ENCODE measurements at regions of chr3 and their contacts with region 1.

Region 1: GRCh38 chr3:128879125-128879969 is at the start of gene ACAD9:
- DNase-seq: peak; percentile 98
- ATAC-seq: peak; percentile 92
- H3K4me3 Mint-ChIP-seq: peak within 1 kb of the TSS; percentile 97
- H3K27ac Mint-ChIP-seq: peak within 1 kb of the TSS; percentile 99
- H3K4me1 Mint-ChIP-seq: peaks cover 66% of the 10 kb centered on the region
- H3K27me3 Mint-ChIP-seq: no peaks in the 10 kb centered on the region
- total RNA-seq, gene ACAD9: 60.0 to 70.7 TPM

Region 2: DNA sequence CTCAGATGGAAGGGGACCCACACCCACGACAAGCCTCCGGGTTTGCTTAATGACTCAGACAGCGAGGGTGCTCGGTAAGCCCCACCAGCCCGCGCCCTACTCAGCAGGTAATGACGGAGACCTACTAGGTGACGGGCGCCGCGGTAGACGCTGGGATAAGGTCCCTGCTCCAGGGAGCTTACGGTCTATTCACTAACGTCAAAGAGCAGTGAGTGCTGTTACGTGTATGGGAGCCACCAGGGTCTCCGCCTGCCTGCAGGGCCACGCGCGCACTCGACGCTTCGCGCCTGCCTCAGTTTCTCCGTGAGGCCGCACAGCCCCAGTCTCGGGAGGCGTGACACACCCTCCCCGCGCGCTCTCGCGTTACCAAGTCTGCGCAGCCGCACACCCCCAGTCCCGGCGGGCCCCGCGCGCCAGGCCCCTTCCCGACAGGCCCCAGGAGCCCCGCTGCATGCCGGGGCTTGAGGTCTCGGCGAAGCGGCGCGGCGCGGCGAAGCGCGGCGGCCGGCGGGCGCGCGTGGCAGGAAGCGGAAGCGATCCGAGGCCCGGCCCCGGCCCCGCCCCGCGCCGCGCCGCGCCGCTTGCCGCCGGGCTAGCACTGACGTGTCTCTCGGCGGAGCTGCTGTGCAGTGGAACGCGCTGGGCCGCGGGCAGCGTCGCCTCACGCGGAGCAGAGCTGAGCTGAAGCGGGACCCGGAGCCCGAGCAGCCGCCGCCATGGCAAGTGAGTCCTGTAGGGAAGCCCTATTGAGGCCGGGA is 827.3 kb before region 1 on chr3 and contains the start of gene SEC61A1:
- CTCF ChIA-PET with region 1: no interaction called
- POLR2A ChIA-PET with region 1: no interaction called
- intact Hi-C with region 1: loop called in 1 of 2 experiments (anchors 1 kb)
- DNase-seq: peak; percentile 98
- ATAC-seq: peak; percentile 96
- H3K4me3 Mint-ChIP-seq: peak within 1 kb of the TSS; percentile 90
- H3K27ac Mint-ChIP-seq: peak within 1 kb of the TSS; percentile 98
- H3K4me1 Mint-ChIP-seq: peaks cover 34% of the 10 kb centered on the region
- H3K27me3 Mint-ChIP-seq: no peaks in the 10 kb centered on the region
- total RNA-seq, gene SEC61A1: 113 to 123 TPM

Region 3: GRCh38 chr3:128680602-128681368 is 198.6 kb before region 1 on chr3:
- CTCF ChIA-PET with region 1: interaction called, 19 read pairs
- POLR2A ChIA-PET with region 1: interaction called, 4 read pairs
- intact Hi-C with region 1: loop called (anchors 1 kb)
- DNase-seq: peak; percentile 98
- ATAC-seq: peak; percentile 98
- H3K4me3 Mint-ChIP-seq: peak overlapping the region; percentile 96
- H3K27ac Mint-ChIP-seq: peak overlapping the region; percentile 99
- H3K4me1 Mint-ChIP-seq: peaks cover 31% of the 10 kb centered on the region
- H3K27me3 Mint-ChIP-seq: no peaks in the 10 kb centered on the region

Region 4: DNA sequence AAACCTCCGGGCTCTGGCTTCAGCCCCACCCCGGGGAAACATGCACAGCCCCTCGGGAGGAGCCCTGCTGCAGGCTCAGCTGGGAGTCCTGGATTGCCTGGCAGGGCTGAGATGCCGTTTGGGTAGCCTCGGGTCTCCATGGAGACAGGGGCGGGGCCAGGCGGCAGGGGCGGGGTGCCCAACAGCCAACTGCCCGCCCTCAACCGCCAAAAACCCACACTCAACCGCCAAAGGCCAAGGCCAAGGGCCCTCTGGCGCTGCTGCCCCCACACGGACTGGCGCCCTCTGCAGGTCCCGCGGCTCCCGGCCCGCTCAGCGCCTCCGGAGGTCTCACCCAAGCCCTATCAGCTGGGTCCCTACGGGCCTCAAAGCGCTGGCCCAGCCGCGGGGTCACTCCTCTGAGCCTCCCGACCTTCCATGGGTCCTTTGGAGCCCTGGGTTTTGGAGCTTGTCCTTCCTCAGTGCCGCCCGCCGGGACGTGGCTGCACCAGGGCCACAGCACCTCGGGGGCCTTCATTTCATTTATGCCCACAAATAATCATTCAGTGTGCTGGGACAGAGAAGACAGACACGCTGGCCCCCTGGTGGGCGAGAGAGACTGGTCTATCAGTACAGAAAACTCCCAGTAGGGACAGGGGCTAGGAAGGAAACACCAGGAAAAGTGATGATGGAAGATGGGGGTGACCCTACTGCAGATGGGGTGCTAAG is 33.4 kb before region 1 on chr3:
- CTCF ChIA-PET with region 1: interaction called, 23 read pairs
- POLR2A ChIA-PET with region 1: no interaction called
- intact Hi-C with region 1: loop called in 1 of 2 experiments (anchors 1 kb)
- DNase-seq: peak; percentile 93
- ATAC-seq: peak; percentile 84
- H3K4me3 Mint-ChIP-seq: peak overlapping the region; percentile 62
- H3K27ac Mint-ChIP-seq: peak overlapping the region; percentile 95
- H3K4me1 Mint-ChIP-seq: peaks cover 20% of the 10 kb centered on the region
- H3K27me3 Mint-ChIP-seq: no peaks in the 10 kb centered on the region

Region 5: GRCh38 chr3:129026728-129027543 is 147.6 kb after region 1 on chr3:
- CTCF ChIA-PET with region 1: no interaction called
- POLR2A ChIA-PET with region 1: no interaction called
- intact Hi-C with region 1: loop called in 1 of 2 experiments (anchors 1 kb)
- DNase-seq: peak; percentile 96
- ATAC-seq: peak; percentile 100
- H3K4me3 Mint-ChIP-seq: peak overlapping the region; percentile 72
- H3K27ac Mint-ChIP-seq: peak overlapping the region; percentile 81
- H3K4me1 Mint-ChIP-seq: peaks cover 12% of the 10 kb centered on the region
- H3K27me3 Mint-ChIP-seq: no peaks in the 10 kb centered on the region

Region 6: GRCh38 chr3:129139911-129140310 is 260.6 kb after region 1 on chr3:
- CTCF ChIA-PET with region 1: no interaction called
- POLR2A ChIA-PET with region 1: no interaction called
- intact Hi-C with region 1: no loop called
- DNase-seq: no peak
- ATAC-seq: no peak
- H3K4me3 Mint-ChIP-seq: no peak overlapping the region
- H3K27ac Mint-ChIP-seq: no peak overlapping the region
- H3K4me1 Mint-ChIP-seq: no peaks in the 10 kb centered on the region
- H3K27me3 Mint-ChIP-seq: no peaks in the 10 kb centered on the region

Region 7: GRCh38 chr3:129183569-129184395 is 304.4 kb after region 1 on chr3 and contains the start of gene CNBP:
- CTCF ChIA-PET with region 1: no interaction called
- POLR2A ChIA-PET with region 1: no interaction called
- intact Hi-C with region 1: loop called in 1 of 2 experiments (anchors 2 kb)
- DNase-seq: peak; percentile 96
- ATAC-seq: peak; percentile 95
- H3K4me3 Mint-ChIP-seq: peak within 1 kb of the TSS; percentile 96
- H3K27ac Mint-ChIP-seq: peak within 1 kb of the TSS; percentile 99
- H3K4me1 Mint-ChIP-seq: peaks cover 29% of the 10 kb centered on the region
- H3K27me3 Mint-ChIP-seq: no peaks in the 10 kb centered on the region
- total RNA-seq, gene CNBP: 305 to 379 TPM

Region 8: GRCh38 chr3:129323651-129324294 is 444.4 kb after region 1 on chr3:
- CTCF ChIA-PET with region 1: no interaction called
- POLR2A ChIA-PET with region 1: no interaction called
- intact Hi-C with region 1: no loop called
- DNase-seq: no peak
- ATAC-seq: no peak
- H3K4me3 Mint-ChIP-seq: no peak overlapping the region
- H3K27ac Mint-ChIP-seq: no peak overlapping the region
- H3K4me1 Mint-ChIP-seq: no peaks in the 10 kb centered on the region
- H3K27me3 Mint-ChIP-seq: no peaks in the 10 kb centered on the region

Region 9: GRCh38 chr3:129439817-129440617 is 560.7 kb after region 1 on chr3 and contains the starts of genes IFT122 and MBD4:
- CTCF ChIA-PET with region 1: no interaction called
- POLR2A ChIA-PET with region 1: no interaction called
- intact Hi-C with region 1: loop called in 1 of 2 experiments (anchors 1 kb)
- DNase-seq: peak; percentile 99
- ATAC-seq: peak; percentile 90
- H3K4me3 Mint-ChIP-seq: peak within 1 kb of the TSS; percentile 100
- H3K27ac Mint-ChIP-seq: peak within 1 kb of the TSS; percentile 91
- H3K4me1 Mint-ChIP-seq: peaks cover 63% of the 10 kb centered on the region
- H3K27me3 Mint-ChIP-seq: no peaks in the 10 kb centered on the region
- total RNA-seq, gene IFT122: 18.4 to 22.6 TPM
- total RNA-seq, gene MBD4: 51.3 to 52.4 TPM